Breast epithelium (tissue), 4 donors: ENCODE measurements at regions of chr20 and their contacts with region 1.

Region 1: GRCh38 chr20:49989234-49990065 is 6.7 kb downstream of the SNAI1 start:
- DNase-seq: no peak
- H3K4me3 ChIP-seq: peak overlapping the region in 1 of 3 donors; percentile 33
- H3K27ac ChIP-seq: peak overlapping the region; percentile 69 to 92
- H3K4me1 ChIP-seq: peaks cover 16 to 20% of the 10 kb centered on the region in 2 donors
- H3K27me3 ChIP-seq: no peaks in the 10 kb centered on the region
- CTCF ChIP-seq: no peak
- POLR2A ChIP-seq: no peak

Region 2: DNA sequence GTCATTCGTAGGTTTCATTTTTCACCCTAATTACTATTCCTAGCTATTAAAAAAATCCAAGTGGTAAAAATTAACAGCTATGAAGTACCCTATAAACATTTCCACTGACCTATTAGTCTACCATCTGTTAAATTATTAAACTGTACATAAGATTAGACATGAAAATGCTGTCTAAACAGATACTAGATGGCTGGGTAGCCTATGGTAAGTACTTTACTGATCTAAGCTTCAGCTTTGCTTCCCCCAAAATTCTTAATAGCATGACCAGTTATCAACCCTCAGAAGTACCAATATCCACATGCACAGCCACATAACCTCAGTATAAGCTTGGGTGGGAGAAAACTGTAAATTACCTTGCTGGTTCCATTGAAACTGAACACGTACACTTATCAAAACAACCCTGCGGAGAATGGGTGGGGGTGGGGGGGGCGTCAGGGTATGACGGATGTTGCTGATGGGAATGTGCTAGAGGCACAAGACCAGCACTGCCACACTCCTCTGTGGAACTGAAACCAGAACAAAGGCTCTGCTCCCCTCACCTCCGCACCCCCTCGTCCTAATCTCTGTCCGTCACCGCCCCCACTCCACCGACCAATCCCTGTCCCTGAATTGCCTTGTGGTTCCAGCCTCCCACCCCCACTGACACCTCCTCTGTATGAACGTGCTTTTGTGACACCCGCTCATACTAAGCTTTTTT is 321.1 kb before region 1 on chr20:
- intact Hi-C with region 1: no loop called
- DNase-seq: no peak
- H3K4me3 ChIP-seq: no peak overlapping the region
- H3K27ac ChIP-seq: no peak overlapping the region
- H3K4me1 ChIP-seq: no peaks in the 10 kb centered on the region
- H3K27me3 ChIP-seq: no peaks in the 10 kb centered on the region
- CTCF ChIP-seq: no peak
- POLR2A ChIP-seq: no peak

Region 3: GRCh38 chr20:49935746-49936152 is 53.7 kb before region 1 on chr20:
- intact Hi-C with region 1: loop called (anchors 2 kb)
- DNase-seq: no peak
- H3K4me3 ChIP-seq: peak overlapping the region; percentile 98 to 100 (median 100)
- H3K27ac ChIP-seq: peak overlapping the region; percentile 33 to 96
- H3K4me1 ChIP-seq: peaks cover 0 to 20% of the 10 kb centered on the region in 2 donors
- H3K27me3 ChIP-seq: no peaks in the 10 kb centered on the region
- CTCF ChIP-seq: no peak
- POLR2A ChIP-seq: no peak

Region 4: GRCh38 chr20:50012282-50013263 is 23.1 kb after region 1 on chr20:
- intact Hi-C with region 1: no loop called
- DNase-seq: no peak
- H3K4me3 ChIP-seq: no peak overlapping the region
- H3K27ac ChIP-seq: no peak overlapping the region
- H3K4me1 ChIP-seq: no peaks in the 10 kb centered on the region
- H3K27me3 ChIP-seq: no peaks in the 10 kb centered on the region
- CTCF ChIP-seq: no peak
- POLR2A ChIP-seq: no peak

Region 5: DNA sequence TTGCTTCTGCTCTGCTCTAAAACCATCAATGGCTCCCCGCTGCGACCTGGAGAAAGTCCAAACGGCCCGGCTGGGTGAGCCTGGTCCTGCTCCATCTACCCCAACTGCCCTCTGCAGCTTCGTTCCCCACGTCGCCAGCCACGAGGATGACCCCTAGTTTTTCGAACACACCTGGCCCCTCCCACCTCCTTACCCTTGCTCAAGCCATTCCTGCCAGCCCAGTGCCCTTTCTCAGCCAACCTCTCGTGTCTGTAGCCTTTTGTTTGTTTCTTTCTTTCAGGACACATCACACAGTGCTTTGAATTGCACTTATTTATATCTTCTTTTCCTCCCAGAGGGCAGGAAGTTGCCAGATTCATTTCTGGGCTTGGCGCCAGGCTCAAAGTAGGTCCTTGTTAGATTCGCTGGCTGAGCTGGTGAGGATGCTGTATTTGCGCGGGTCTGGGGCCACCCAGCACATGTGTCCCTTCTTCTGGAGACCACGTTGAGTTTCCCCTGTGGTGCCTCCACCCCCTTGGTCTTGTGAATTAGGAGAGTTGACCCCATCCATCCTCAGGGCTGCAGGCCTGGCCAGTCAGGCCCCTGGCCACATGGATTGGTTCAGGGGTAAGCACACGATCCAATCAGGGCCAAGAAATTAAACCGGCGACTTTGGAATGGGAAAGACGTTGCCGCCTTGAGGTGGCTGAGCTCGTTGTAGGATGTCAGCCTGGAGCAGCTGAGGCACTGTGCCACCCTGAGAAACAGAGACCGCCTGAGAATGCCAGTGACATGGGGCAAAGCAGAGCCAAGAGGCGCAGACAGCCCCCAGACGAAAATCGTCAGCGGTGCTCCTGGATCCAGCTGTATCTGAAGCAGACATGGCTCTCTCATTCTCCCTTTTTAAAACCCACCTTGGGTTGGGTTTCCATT is 357.2 kb after region 1 on chr20:
- intact Hi-C with region 1: no loop called
- DNase-seq: peak; percentile 82 to 93
- H3K4me3 ChIP-seq: peak overlapping the region; percentile 14 to 42 (median 25)
- H3K27ac ChIP-seq: peak overlapping the region; percentile 86 to 89
- H3K4me1 ChIP-seq: peaks cover 8 to 40% of the 10 kb centered on the region in 2 donors
- H3K27me3 ChIP-seq: no peaks in the 10 kb centered on the region
- CTCF ChIP-seq: no peak
- POLR2A ChIP-seq: no peak